Upper lobe of right lung (tissue), 1 donor: ENCODE measurements at regions of chr3 and their contacts with region 1.

Region 1: DNA sequence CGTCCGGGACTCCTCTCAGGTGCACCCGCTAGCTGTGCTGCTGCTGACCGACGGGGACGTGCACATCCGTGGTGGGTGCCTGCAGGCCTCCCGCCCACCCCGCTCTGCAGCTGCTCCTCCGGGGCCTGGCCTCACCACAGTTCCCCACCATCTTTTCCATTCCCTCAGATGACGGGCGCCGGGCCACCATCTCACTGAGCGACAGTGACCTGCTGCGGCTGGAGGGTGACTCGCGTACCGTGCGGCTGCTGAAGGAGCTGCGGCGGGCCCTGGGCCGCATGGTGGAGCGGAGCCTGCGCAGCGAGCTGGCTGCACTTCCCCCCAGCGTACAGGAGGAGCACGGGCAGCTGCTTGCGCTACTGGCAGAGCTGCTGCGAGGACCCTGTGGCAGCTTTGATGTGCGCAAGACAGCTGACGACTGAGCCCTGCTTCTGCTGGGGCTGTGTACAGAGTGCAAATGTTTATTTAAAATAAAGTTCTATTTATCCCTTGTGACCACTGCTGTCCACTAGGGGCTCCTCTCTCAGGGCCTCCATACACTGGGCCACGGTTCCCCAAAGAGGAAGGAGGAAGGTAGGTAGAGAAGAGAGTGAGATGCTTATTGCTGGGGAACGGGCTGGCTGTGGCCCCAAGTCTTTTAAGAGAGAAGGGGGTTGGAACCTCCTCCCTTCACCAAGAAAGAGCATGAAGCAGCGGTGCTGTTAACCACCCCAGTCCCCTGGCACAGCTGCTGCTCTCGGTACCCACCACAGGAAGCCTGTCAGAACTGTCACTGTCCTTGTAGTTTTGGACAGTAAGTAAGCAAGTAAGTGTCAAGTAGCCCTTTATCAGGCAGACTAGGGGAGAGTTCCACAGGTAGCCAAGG is 47.0 kb downstream of the DHX30 start:
- DNase-seq: no peak
- ATAC-seq: peak; percentile 28
- H3K4me3 ChIP-seq: no peak overlapping the region
- H3K27ac ChIP-seq: no peak overlapping the region
- H3K4me1 ChIP-seq: no peaks in the 10 kb centered on the region
- H3K27me3 ChIP-seq: no peaks in the 10 kb centered on the region
- CTCF ChIP-seq: peak; percentile 29

Region 2: DNA sequence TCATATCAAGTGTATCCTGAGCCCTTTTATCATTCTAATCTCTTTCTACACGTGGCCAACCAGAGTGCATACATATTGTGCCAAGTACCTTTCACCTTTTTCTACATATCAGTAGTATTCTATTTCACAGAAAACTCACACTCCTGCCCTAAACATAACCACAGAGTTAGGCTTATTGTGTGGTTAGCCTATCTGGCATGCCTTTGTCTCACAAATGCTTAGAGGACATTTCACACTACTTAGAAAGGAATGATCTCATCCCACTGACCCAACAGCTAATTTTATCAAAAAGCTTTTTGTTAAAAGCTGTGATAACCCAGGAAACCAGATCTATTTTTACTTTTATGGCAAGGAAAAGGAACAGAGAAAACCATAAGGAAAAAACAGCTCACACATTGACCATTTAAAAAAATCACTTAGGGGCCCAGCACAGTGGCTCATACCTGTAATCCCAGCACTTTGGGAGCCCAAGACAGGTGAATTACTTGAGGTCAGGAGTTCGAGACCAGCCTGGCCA is 184.1 kb after region 1 on chr3:
- intact Hi-C with region 1: no loop called
- DNase-seq: no peak
- ATAC-seq: no peak
- H3K4me3 ChIP-seq: no peak overlapping the region
- H3K27ac ChIP-seq: no peak overlapping the region
- H3K4me1 ChIP-seq: peaks cover 33% of the 10 kb centered on the region
- H3K27me3 ChIP-seq: no peaks in the 10 kb centered on the region
- CTCF ChIP-seq: no peak

Region 3: GRCh38 chr3:48112813-48113212 is 262.9 kb after region 1 on chr3:
- intact Hi-C with region 1: no loop called
- DNase-seq: no peak
- ATAC-seq: no peak
- H3K4me3 ChIP-seq: no peak overlapping the region
- H3K27ac ChIP-seq: no peak overlapping the region
- H3K4me1 ChIP-seq: peaks cover 4% of the 10 kb centered on the region
- H3K27me3 ChIP-seq: no peaks in the 10 kb centered on the region
- CTCF ChIP-seq: no peak

Region 4: GRCh38 chr3:48151058-48151806 is 301.3 kb after region 1 on chr3:
- intact Hi-C with region 1: loop called (anchors 10 kb)
- DNase-seq: peak; percentile 82
- ATAC-seq: peak; percentile 98
- H3K4me3 ChIP-seq: no peak overlapping the region
- H3K27ac ChIP-seq: no peak overlapping the region
- H3K4me1 ChIP-seq: peaks cover 11% of the 10 kb centered on the region
- H3K27me3 ChIP-seq: no peaks in the 10 kb centered on the region
- CTCF ChIP-seq: peak; percentile 85